ENCODE measurements at regions of chr15 and their contacts with region 1.

Region 1: DNA sequence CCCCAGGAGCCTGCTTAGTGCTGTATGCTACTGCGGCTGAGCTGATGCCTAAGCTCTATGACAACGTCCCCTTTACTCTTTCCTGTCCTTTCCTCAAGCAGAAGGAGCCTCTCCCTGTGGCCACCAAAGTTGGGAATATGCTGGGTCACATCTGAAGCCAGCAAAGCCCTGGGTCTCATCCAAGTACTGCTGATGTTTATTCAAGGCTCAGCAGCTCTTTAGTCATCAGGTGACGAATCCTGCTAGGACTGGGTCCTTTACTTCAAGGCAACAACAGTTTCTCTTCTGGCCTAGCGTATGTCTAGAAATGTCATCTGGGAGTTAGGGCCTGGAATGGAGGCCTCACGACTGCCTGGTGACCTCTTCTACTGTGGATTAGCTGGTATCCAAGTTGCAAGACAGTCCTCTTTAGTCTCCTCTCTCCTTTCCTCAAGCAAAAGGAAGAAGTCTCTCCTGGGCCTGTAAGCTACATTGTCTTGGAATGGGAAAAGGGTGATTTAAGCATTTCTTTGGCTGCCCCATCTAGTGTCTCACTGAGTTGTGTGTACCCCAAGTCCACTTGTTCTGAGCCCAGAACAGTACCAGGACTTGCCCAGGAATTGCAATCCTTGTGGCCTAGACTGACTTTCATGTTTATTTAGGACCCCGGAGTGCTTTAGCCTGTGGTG is 63.9 kb downstream of the TNFAIP8L3 start:
- DNase-seq: peak; percentile 92
- ATAC-seq: peak; percentile 98
- H3K4me3 ChIP-seq: no peak overlapping the region
- H3K27ac ChIP-seq: peak overlapping the region; percentile 75
- H3K4me1 ChIP-seq: peaks cover 15% of the 10 kb centered on the region
- H3K27me3 ChIP-seq: no peaks in the 10 kb centered on the region
- CTCF ChIP-seq: no peak

Region 2: DNA sequence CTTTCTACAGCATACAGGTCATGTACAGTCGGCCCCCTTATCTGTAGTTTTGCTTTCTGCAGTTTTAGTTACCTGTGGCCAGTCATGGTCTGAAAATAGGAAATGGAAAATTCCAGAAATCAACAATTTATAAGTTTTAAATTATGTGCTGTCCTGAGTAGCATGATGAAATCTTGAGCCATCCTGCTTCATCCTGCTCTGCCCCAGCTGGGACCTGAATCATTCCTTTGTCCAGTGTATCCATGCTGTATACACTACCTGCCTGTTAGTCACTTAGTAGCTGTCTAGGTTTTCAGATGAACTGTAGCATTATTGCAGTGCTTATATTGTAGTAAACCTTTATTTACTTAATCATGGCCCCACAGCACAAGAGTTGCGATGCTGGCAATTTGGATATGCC is 77.5 kb before region 1 on chr15:
- CTCF ChIA-PET with region 1: no interaction called
- POLR2A ChIA-PET with region 1: interaction called, 24 read pairs
- intact Hi-C with region 1: no loop called
- DNase-seq: peak; percentile 37
- ATAC-seq: peak; percentile 79
- H3K4me3 ChIP-seq: no peak overlapping the region
- H3K27ac ChIP-seq: no peak overlapping the region; the same call in 1 of the 2 replicates
- H3K4me1 ChIP-seq: no peaks in the 10 kb centered on the region
- H3K27me3 ChIP-seq: no peaks in the 10 kb centered on the region
- CTCF ChIP-seq: no peak

Region 3: DNA sequence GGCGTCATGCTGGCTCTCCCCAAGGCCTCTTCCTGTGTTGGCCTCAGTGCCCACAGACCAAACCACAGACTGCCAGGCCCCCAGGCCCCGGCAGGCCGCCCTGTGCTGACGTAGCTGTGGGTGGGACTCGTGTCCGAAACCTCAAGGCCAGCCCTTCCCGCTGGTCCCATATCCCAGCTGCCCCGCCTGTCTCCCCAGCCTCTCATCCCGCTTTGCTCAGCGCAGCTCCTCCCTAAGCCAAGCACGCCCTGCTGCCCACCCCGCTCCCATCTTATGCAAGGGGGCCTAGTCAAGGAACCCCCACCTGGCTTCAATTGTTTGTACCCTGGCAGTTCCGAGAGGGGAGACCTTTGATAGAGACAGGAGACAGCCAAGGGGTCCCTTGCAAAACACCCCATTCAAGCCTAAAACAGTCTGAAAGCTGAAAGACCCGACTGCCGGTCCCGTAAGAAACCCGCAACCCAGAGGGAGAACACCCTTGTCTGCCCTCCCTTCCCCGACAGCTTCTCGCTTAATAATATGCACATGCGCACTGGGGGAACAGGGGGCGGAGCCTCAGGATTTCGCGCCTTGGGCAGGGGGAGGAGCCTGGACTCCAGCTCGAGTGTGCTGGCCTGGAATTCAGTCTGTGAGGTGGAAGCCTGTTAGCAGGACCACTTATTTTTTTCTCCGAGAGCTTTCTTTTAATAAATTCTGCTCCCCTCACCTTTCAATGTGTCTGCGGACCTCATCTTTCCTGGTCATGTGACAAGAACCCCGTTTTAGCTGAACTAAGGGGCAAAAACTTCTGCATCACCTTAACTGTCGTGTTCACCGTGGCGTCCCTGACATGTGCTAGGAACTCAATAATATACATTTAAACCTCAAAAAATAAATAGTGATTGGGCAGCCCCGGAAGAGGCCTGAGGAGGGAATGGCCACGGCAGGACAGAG is 46.7 kb after region 1 on chr15:
- CTCF ChIA-PET with region 1: no interaction called
- POLR2A ChIA-PET with region 1: no interaction called
- intact Hi-C with region 1: no loop called
- DNase-seq: no peak
- ATAC-seq: no peak
- H3K4me3 ChIP-seq: no peak overlapping the region
- H3K27ac ChIP-seq: no peak overlapping the region
- H3K4me1 ChIP-seq: no peaks in the 10 kb centered on the region
- H3K27me3 ChIP-seq: no peaks in the 10 kb centered on the region
- CTCF ChIP-seq: no peak